ENCODE measurements at regions of chr20 and their contacts with region 1.

Region 1: GRCh38 chr20:20695250-20695816 is 17.1 kb downstream of the RALGAPA2 start:
- DNase-seq: no peak
- H3K4me3 Mint-ChIP-seq: no peak overlapping the region
- H3K27ac Mint-ChIP-seq: no peak overlapping the region
- H3K4me1 Mint-ChIP-seq: peaks cover 12% of the 10 kb centered on the region
- H3K27me3 Mint-ChIP-seq: no peaks in the 10 kb centered on the region

Region 2: DNA sequence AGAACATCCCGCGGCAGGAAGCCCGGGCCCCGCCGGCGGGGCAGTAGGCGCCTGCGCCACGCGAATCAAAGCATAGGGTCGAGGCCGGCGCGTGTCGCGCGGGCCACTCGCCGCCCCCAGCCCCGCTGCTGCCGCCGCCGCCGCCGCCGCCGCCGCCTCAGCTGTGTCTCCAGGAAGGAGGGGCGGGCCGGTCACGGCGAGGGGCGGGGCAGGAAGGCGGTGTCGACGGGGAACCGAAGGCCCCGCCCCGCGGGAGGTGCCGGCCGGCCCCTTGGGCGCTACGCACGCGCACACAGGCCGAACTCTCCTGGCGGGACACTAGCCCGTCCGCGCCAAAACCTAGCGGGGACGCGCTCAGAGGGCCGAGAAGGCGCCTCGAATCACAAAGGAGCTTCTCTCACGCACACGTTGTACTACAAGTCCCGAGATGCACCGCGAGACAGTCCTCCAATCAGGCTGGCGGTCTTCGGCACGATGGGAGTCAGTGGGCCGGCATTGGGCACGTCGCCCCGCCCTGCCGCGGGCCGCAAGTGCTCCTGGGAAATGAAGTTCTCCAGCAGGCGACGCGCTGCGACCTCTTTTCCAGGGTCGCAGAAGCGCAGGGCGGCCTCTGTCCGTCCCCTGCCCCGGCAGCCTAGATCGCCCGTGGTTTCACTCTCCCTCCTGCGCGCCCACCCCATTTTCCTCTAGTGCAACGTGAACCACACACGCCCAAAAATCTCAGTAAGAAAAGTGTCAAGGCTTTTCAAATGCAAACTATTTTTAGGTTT is 17.3 kb after region 1 on chr20 and contains the start of gene RALGAPA2:
- CTCF ChIA-PET with region 1: no interaction called
- POLR2A ChIA-PET with region 1: no interaction called
- intact Hi-C with region 1: loop called (anchors 2 kb)
- DNase-seq: peak; percentile 95
- H3K4me3 Mint-ChIP-seq: peak within 1 kb of the TSS; percentile 76
- H3K27ac Mint-ChIP-seq: peak within 1 kb of the TSS; percentile 94
- H3K4me1 Mint-ChIP-seq: peaks cover 25% of the 10 kb centered on the region
- H3K27me3 Mint-ChIP-seq: peaks cover 2% of the 10 kb centered on the region
- total RNA-seq, gene RALGAPA2: 15.9 to 16.6 TPM

Measured in activated CD4-positive, alpha-beta memory T cell treated with anti-CD3 and anti-CD28 coated beads for 36 hours (primary cell).